ENCODE measurements at regions of chr1 and their contacts with region 1.

Region 1: GRCh38 chr1:56584910-56585528 is 5.7 kb upstream of the PLPP3 start:
- DNase-seq: no peak
- ATAC-seq: peak; percentile 71
- H3K4me3 ChIP-seq: no peak overlapping the region
- H3K27ac ChIP-seq: no peak overlapping the region
- H3K4me1 ChIP-seq: no peaks in the 10 kb centered on the region
- H3K27me3 ChIP-seq: no peaks in the 10 kb centered on the region
- CTCF ChIP-seq: peak; percentile 71 to 82 (median 78)
- EP300 ChIP-seq: no peak
- POLR2A ChIP-seq: no peak
- RAD21 ChIP-seq: peak; percentile 95

Region 2: DNA sequence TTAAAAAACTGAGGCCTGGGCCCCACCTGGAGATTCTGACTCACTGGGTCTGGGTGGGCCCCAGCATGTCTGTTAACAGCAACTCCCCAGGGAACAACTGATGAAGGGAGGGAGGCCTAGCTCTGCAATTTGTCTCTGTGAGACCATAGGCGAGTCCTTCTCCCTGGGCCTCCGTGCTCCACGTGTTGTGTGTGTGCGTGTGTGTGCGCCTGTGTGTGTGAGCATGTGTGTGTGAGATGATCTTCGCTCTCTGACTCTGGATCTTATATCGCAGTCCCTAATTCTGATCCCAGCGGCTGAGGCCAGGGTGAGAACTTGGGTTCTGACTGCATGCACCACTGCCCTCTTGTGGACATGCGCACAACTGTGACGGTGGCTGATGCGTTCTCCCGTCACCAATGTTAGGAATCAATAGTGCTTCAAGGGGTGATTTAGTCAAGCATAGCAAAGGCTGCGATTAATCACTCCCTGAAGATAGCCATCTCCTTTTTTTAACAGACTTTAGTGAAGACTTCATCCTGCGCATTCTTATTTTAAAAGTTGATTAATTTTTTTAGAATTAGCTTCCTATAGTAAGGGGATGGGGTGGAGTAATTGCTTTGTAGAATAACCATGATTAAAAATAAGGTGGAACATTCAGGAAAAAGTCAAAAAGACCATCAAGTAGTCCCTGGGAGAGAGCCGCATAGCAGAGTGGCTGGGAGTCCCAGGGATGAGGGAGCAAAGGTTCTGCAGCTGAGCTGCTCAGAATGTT is 1307.5 kb before region 1 on chr1:
- CTCF ChIA-PET with region 1: interaction called, 20 read pairs
- POLR2A ChIA-PET with region 1: no interaction called
- RAD21 ChIA-PET with region 1: interaction called, 8 read pairs
- SMC1A ChIA-PET with region 1: interaction called, 59 read pairs
- in situ Hi-C with region 1: loop called (anchors 5 kb)
- intact Hi-C with region 1: no loop called
- DNase-seq: peak; percentile 59
- ATAC-seq: peak; percentile 98
- H3K4me3 ChIP-seq: no peak overlapping the region
- H3K27ac ChIP-seq: no peak overlapping the region
- H3K4me1 ChIP-seq: peaks cover 9% of the 10 kb centered on the region; the same call in 1 of the 2 replicates
- H3K27me3 ChIP-seq: no peaks in the 10 kb centered on the region
- CTCF ChIP-seq: peak; percentile 67 to 84 (median 82)
- EP300 ChIP-seq: no peak
- POLR2A ChIP-seq: no peak
- RAD21 ChIP-seq: peak; percentile 77

Region 3: GRCh38 chr1:55702064-55702463 is 883.0 kb before region 1 on chr1:
- CTCF ChIA-PET with region 1: interaction called, 30 read pairs
- POLR2A ChIA-PET with region 1: no interaction called
- RAD21 ChIA-PET with region 1: interaction called, 15 read pairs
- SMC1A ChIA-PET with region 1: interaction called, 6 read pairs
- in situ Hi-C with region 1: loop called (anchors 10 kb)
- intact Hi-C with region 1: loop called (anchors 2 kb)
- DNase-seq: no peak
- ATAC-seq: peak; percentile 85
- H3K4me3 ChIP-seq: no peak overlapping the region
- H3K27ac ChIP-seq: no peak overlapping the region
- H3K4me1 ChIP-seq: no peaks in the 10 kb centered on the region
- H3K27me3 ChIP-seq: no peaks in the 10 kb centered on the region
- CTCF ChIP-seq: peak; percentile 64 to 90 (median 83)
- EP300 ChIP-seq: no peak
- POLR2A ChIP-seq: no peak
- RAD21 ChIP-seq: peak; percentile 57

Region 4: DNA sequence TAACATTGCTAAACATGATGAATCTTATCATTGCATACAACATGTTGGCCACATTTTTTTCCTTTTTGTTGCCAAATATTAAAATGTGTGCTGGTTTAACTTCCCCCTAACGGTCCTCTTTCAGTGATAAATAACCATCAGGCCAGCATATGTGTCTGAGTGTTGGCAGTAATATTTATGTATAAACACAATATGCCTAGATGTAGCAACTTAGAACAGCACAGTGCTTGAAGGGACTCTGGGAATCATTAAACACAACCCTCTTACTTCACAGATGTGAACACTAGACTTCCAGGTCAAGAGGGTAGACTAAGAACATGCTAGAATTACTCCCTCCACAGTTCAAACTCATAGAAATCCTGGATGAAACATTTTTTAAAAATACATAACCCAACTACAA is 587.5 kb before region 1 on chr1:
- CTCF ChIA-PET with region 1: no interaction called
- POLR2A ChIA-PET with region 1: no interaction called
- RAD21 ChIA-PET with region 1: no interaction called
- SMC1A ChIA-PET with region 1: no interaction called
- in situ Hi-C with region 1: no loop called
- intact Hi-C with region 1: no loop called
- DNase-seq: no peak
- ATAC-seq: no peak
- H3K4me3 ChIP-seq: no peak overlapping the region
- H3K27ac ChIP-seq: no peak overlapping the region
- H3K4me1 ChIP-seq: no peaks in the 10 kb centered on the region
- H3K27me3 ChIP-seq: no peaks in the 10 kb centered on the region
- CTCF ChIP-seq: no peak
- EP300 ChIP-seq: no peak
- POLR2A ChIP-seq: no peak
- RAD21 ChIP-seq: no peak

Region 5: DNA sequence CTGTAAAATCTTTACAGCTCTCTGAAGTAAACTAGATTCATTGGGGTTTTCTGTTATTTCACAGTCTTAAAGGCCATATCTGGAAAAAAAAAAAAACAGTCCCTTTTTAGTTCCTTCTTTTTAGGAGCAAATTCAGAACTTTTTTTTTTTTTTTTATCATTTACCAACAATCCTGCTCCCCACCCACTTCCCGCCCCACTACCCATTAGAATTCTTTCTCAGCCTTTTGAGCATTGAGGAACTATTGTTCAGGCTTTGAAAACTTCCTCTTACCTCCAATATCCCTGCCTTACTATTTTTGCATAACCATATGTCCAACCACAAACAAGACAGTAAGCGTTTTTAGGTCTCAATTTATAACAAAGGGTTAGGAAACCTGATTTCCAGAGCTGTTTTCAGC is 335.8 kb before region 1 on chr1:
- CTCF ChIA-PET with region 1: interaction called, 15 read pairs
- POLR2A ChIA-PET with region 1: no interaction called
- RAD21 ChIA-PET with region 1: interaction called, 12 read pairs
- SMC1A ChIA-PET with region 1: interaction called, 15 read pairs
- in situ Hi-C with region 1: no loop called
- intact Hi-C with region 1: loop called (anchors 10 kb)
- DNase-seq: no peak
- ATAC-seq: no peak
- H3K4me3 ChIP-seq: no peak overlapping the region
- H3K27ac ChIP-seq: no peak overlapping the region
- H3K4me1 ChIP-seq: no peaks in the 10 kb centered on the region
- H3K27me3 ChIP-seq: no peaks in the 10 kb centered on the region
- CTCF ChIP-seq: no peak
- EP300 ChIP-seq: no peak
- POLR2A ChIP-seq: no peak
- RAD21 ChIP-seq: no peak

Region 6: GRCh38 chr1:56339786-56340465 is 245.1 kb before region 1 on chr1:
- CTCF ChIA-PET with region 1: interaction called, 17 read pairs
- POLR2A ChIA-PET with region 1: interaction called, 9 read pairs
- RAD21 ChIA-PET with region 1: interaction called, 167 read pairs
- SMC1A ChIA-PET with region 1: interaction called, 73 read pairs
- in situ Hi-C with region 1: no loop called
- intact Hi-C with region 1: no loop called
- DNase-seq: no peak
- ATAC-seq: peak; percentile 76
- H3K4me3 ChIP-seq: no peak overlapping the region
- H3K27ac ChIP-seq: no peak overlapping the region
- H3K4me1 ChIP-seq: no peaks in the 10 kb centered on the region
- H3K27me3 ChIP-seq: no peaks in the 10 kb centered on the region
- CTCF ChIP-seq: no peak
- EP300 ChIP-seq: no peak
- POLR2A ChIP-seq: no peak
- RAD21 ChIP-seq: no peak

Region 7: DNA sequence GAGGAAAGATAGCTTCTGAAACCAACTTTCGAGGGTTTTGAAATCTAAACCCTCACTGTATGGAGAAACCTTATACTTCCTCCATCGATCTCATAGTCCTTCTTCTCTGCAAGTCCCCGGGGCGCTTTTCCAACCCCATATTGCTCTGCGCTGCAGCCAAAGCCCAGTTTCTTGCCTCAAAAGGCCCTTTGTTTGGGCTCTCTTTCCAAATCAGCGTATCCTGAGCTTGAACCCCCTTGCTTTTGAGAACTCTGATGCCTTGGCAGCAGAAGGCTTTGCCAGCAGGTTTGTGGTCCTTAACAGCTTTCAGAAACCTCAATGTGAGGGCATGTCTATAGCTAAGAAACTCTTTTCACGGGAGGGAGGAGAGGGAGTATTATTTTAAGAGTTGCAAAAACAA is 27.3 kb before region 1 on chr1:
- CTCF ChIA-PET with region 1: interaction called, 253 read pairs
- POLR2A ChIA-PET with region 1: interaction called, 195 read pairs
- RAD21 ChIA-PET with region 1: interaction called, 381 read pairs
- SMC1A ChIA-PET with region 1: interaction called, 439 read pairs
- in situ Hi-C with region 1: no loop called
- intact Hi-C with region 1: no loop called
- DNase-seq: no peak
- ATAC-seq: no peak
- H3K4me3 ChIP-seq: no peak overlapping the region
- H3K27ac ChIP-seq: no peak overlapping the region
- H3K4me1 ChIP-seq: no peaks in the 10 kb centered on the region
- H3K27me3 ChIP-seq: no peaks in the 10 kb centered on the region
- CTCF ChIP-seq: no peak
- EP300 ChIP-seq: no peak
- POLR2A ChIP-seq: no peak
- RAD21 ChIP-seq: no peak

Region 8: DNA sequence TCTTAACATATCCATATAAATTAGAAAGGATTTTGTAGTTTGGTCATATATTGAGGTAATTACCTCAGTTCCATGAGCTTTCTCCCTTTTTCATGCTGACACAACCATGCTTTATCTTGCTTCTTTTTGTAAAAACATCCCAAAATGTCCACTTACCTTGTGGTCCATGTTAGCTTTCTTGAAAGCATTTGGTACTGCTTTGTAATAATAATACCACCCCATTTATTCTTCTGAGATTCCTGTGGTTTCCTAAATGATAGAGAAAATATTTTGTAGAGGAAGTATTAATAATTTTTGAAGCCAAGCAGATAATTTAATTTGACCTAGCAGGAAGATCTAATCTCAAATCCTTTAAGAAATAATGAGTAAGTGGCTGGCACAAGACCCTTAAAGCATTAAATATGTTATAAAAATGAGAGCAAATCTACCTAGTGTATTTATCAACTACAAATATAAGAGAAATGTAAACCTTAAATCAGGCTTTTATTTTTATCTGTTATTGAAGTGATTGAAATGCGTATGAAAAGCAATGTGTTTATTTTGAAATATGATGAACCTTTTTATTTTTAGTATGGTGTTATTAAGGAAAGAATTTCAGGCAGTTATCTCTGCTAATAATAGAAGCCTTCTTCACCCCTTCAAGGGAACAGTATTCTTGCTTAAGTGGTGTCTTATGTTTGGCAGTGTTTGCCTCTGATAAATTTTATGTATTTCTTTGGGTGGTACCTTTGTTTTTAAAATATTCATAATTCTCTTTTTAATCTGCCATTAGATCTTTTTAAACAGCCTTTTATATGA is 69.3 kb after region 1 on chr1:
- CTCF ChIA-PET with region 1: no interaction called
- POLR2A ChIA-PET with region 1: no interaction called
- RAD21 ChIA-PET with region 1: no interaction called
- SMC1A ChIA-PET with region 1: no interaction called
- in situ Hi-C with region 1: no loop called
- intact Hi-C with region 1: no loop called
- DNase-seq: no peak
- ATAC-seq: no peak
- H3K4me3 ChIP-seq: no peak overlapping the region
- H3K27ac ChIP-seq: no peak overlapping the region
- H3K4me1 ChIP-seq: no peaks in the 10 kb centered on the region
- H3K27me3 ChIP-seq: no peaks in the 10 kb centered on the region
- CTCF ChIP-seq: no peak
- EP300 ChIP-seq: no peak
- POLR2A ChIP-seq: no peak
- RAD21 ChIP-seq: no peak